Left ventricle myocardium inferior (tissue), 1 donor: ENCODE measurements at regions of chr17 and their contacts with region 1.

Region 1: DNA sequence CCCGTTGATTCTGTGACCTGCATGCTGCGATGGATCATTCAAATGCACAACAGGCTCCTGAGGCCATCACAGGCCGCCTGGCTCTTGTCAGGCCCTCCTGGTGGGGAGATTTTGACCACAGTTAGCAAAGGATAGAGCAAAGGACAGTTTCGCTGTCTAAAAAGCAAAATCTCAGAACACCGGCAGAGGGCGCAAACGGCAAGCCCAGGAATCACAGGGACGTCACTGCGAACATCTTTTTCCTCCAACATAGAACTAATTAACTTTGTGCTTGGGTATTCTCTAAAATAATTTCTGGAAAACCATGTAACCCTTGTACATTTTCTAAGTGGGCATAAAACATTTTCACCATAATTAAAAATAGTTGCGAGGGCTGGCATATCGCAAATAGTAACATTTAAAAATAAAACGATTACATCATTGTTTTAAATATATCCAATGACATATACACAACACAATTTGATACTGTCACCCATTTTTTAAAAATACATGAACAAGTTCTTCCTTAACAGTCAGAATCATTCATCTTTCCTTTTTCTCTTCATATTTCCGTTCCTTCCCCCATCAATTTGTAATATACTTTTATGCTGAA is 19.7 kb upstream of the SLC47A1 start:
- DNase-seq: peak; percentile 61
- H3K4me3 ChIP-seq: peak overlapping the region; percentile 30
- H3K27ac ChIP-seq: peak overlapping the region; percentile 50
- H3K4me1 ChIP-seq: peaks cover 25% of the 10 kb centered on the region
- H3K27me3 ChIP-seq: no peaks in the 10 kb centered on the region
- CTCF ChIP-seq: peak; percentile 94

Region 2: DNA sequence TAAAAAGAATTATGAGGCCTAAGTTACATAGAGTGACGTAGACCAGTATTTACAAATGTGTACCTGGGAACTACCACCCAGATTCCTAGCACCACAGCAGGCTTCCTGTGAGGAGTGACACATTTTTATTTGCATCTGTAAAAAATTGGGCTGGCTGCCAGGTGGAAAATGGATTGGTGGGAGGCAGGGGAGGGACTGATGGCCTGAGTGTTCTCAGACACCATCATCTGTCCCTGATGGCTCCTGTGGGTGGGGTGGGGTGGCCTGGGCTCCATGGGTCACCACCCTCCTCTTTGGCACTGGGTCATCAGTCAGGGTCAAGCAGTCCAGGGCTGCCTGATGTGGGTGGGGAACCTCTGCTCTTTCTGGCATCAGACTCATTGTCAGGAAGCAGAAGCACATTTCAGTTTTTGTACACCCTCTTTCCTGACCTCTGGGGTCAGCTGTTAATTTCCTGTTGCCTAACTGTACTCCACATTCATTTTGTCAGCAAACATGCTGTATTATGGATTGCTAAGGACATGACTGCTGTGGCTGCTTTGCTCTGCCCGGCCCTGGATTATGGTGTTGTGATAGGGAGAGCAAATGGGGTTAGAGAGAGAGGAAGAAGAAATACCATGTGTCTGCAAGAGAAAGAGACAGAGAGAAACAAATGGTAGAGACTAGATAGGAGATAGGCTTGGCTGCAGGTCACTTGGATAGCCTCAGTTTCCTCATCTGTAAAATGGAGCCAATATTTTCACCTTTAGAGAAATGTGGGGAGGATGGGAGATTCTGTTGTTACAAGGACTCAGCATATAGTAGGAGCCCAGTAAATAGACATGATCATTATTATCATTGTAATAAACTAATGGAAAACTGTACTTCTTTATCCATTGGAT is 115.5 kb before region 1 on chr17:
- intact Hi-C with region 1: no loop called
- DNase-seq: peak; percentile 68
- H3K4me3 ChIP-seq: no peak overlapping the region
- H3K27ac ChIP-seq: peak overlapping the region; percentile 64
- H3K4me1 ChIP-seq: peaks cover 23% of the 10 kb centered on the region
- H3K27me3 ChIP-seq: no peaks in the 10 kb centered on the region
- CTCF ChIP-seq: no peak

Region 3: DNA sequence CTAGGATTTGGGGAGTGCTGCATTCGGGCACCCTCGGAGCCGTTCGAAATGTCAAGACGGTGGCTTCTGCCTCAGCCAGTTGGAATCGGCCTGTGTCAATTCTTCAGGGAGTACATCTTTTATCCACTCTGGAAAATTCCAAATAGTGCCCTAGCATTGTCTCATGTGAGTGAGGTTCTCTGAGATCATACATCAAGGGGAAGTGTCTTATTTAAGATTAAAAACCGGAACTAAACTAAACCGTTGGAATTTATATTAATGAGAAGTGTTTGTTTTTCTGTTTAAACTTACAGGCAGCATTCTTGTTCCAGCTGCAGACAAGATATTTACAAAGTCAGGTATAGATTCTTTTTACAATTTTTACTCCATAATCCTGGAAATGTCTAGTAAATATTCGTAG is 76.5 kb after region 1 on chr17:
- intact Hi-C with region 1: no loop called
- DNase-seq: no peak
- H3K4me3 ChIP-seq: no peak overlapping the region
- H3K27ac ChIP-seq: no peak overlapping the region
- H3K4me1 ChIP-seq: no peaks in the 10 kb centered on the region
- H3K27me3 ChIP-seq: peaks cover 3% of the 10 kb centered on the region
- CTCF ChIP-seq: no peak

Region 4: GRCh38 chr17:19766422-19767270 is 252.7 kb after region 1 on chr17:
- intact Hi-C with region 1: loop called (anchors 5 kb)
- DNase-seq: peak; percentile 78
- H3K4me3 ChIP-seq: no peak overlapping the region
- H3K27ac ChIP-seq: no peak overlapping the region
- H3K4me1 ChIP-seq: peaks cover 3% of the 10 kb centered on the region
- H3K27me3 ChIP-seq: no peaks in the 10 kb centered on the region
- CTCF ChIP-seq: peak; percentile 95